Left cardiac atrium (tissue), 4 donors: ENCODE measurements at regions of chr13 and their contacts with region 1.

Region 1: GRCh38 chr13:99063952-99064351 is 86.1 kb upstream of the DOCK9 start:
- DNase-seq: no peak
- ATAC-seq: no peak

Region 2: GRCh38 chr13:99080131-99080530 is 16.2 kb after region 1 on chr13:
- intact Hi-C with region 1: loop called in 1 of 2 experiments (anchors 2 kb)
- DNase-seq: no peak
- ATAC-seq: no peak